ENCODE measurements at regions of chr1 and their contacts with region 1.

Region 1: DNA sequence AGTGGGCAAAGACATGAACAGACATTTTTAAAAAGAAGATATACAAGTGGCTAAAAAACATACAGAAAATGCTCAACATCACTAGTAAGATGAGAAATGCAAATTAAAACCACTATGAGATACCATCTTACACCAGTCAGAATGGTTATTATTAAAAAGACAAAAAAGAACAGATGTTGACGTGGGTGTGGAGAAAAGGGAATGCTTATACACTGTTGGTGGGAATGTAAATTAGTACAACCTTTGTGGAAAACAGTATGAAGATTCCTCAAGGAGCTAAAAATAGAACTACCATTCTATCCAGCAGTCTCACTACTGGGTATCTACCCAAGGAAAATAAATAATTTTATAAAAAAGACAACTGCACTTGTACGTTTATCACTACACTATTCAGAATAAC is 73.9 kb downstream of the EBNA1BP2 start:
- DNase-seq: no peak
- H3K4me3 ChIP-seq: no peak overlapping the region
- H3K27ac ChIP-seq: no peak overlapping the region
- H3K4me1 ChIP-seq: no peaks in the 10 kb centered on the region
- H3K27me3 ChIP-seq: no peaks in the 10 kb centered on the region
- CTCF ChIP-seq: no peak

Region 2: DNA sequence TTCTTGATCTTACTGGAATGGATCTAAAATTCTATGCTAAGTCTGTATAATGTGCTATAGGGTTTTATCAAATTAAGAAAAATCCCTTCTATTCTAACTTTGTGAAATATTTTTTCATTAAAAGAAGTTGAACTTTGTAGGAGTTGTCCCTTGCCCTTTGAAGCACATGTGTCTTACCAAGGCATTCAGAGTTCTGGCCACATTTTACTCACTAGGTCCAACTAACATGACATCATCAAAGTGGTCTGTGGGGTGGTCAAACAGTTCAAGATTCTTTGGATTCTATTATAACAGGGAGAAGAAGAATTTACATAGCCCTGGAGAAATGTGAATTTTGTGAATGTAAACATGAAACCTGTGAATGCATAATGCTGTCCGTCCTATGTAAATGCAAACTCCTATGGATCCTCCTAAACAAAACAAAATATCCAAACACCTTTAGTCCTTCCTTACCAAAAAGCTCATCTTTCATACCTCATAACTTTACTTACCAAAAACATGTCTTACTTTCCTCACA is 14.8 kb before region 1 on chr1:
- CTCF ChIA-PET with region 1: no interaction called
- POLR2A ChIA-PET with region 1: interaction called, 16 read pairs
- intact Hi-C with region 1: no loop called
- DNase-seq: no peak
- H3K4me3 ChIP-seq: no peak overlapping the region
- H3K27ac ChIP-seq: no peak overlapping the region
- H3K4me1 ChIP-seq: no peaks in the 10 kb centered on the region
- H3K27me3 ChIP-seq: no peaks in the 10 kb centered on the region
- CTCF ChIP-seq: no peak

Region 3: GRCh38 chr1:43147553-43148319 is 49.5 kb after region 1 on chr1:
- CTCF ChIA-PET with region 1: no interaction called
- POLR2A ChIA-PET with region 1: interaction called, 18 read pairs
- intact Hi-C with region 1: no loop called
- DNase-seq: peak; percentile 94
- H3K4me3 ChIP-seq: peak overlapping the region; percentile 32
- H3K27ac ChIP-seq: no peak overlapping the region
- H3K4me1 ChIP-seq: peaks cover 9% of the 10 kb centered on the region
- H3K27me3 ChIP-seq: no peaks in the 10 kb centered on the region
- CTCF ChIP-seq: no peak